Panc1 (cell line): ENCODE measurements at regions of chr11 and their contacts with region 1.

Region 1: GRCh38 chr11:4636962-4637661 is at the start of gene OR51D1:
- DNase-seq: peak; percentile 75
- ATAC-seq: peak; percentile 97
- H3K4me3 ChIP-seq: peak within 1 kb of the TSS in 1 of 2 experiments; percentile 34; a peak in 2 of 4 replicates
- H3K27ac ChIP-seq: no peak within 1 kb of the TSS
- H3K4me1 ChIP-seq: no peaks in the 10 kb centered on the region
- H3K27me3 ChIP-seq: peaks cover 6% of the 10 kb centered on the region; the same call in 1 of the 2 replicates
- CTCF ChIP-seq: peak; percentile 97
- total RNA-seq, gene OR51D1: not detected

Region 2: DNA sequence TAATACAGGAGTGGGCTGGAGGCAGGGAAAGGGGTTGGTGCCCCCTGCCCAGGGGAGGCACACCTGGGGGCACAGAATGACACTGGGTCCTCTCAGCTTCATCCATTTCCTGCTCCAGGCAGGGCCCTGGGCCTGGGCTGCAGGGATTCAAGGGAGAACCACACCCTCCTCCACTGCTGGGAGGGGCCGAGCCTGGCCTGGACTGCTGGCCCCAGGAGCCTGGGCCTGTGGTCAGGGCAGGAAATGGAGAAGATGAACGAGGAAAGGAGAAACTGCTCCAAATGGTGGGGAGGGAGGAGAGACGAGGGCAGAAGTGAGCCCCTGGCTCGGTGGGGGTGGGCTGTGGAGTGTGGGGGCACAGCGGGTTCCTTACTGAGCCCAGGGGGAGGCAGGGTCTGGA is 1899.2 kb before region 1 on chr11:
- CTCF ChIA-PET with region 1: no interaction called
- POLR2A ChIA-PET with region 1: no interaction called
- in situ Hi-C with region 1: no loop called
- intact Hi-C with region 1: no loop called
- DNase-seq: no peak
- ATAC-seq: no peak
- H3K4me3 ChIP-seq: no peak overlapping the region
- H3K27ac ChIP-seq: no peak overlapping the region
- H3K4me1 ChIP-seq: peaks cover 23% of the 10 kb centered on the region
- H3K27me3 ChIP-seq: no peaks in the 10 kb centered on the region
- CTCF ChIP-seq: no peak

Region 3: DNA sequence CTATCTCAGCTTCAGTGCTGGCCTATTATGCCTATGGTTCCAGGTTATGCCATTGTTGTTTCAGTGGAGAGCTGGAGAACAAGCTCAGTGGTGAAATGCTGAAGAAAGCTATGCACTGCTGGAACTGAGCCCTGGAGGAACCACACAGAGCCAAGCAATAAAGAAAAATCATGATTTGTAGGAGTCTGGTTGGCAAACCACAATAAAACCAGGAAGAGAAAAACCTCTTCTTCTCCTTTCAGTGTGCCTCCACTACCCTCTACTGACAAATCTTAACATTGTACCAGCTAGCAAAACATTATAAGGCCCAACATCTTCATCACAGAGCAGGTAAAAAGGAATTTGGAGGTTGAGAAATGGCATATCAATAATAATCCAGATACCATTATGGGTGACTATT is 189.3 kb after region 1 on chr11:
- CTCF ChIA-PET with region 1: interaction called, 13 read pairs
- POLR2A ChIA-PET with region 1: no interaction called
- in situ Hi-C with region 1: no loop called
- intact Hi-C with region 1: loop called (anchors 2 kb)
- DNase-seq: no peak
- ATAC-seq: peak; percentile 65; the same call in 1 of the 2 replicates
- H3K4me3 ChIP-seq: no peak overlapping the region
- H3K27ac ChIP-seq: no peak overlapping the region
- H3K4me1 ChIP-seq: no peaks in the 10 kb centered on the region
- H3K27me3 ChIP-seq: no peaks in the 10 kb centered on the region
- CTCF ChIP-seq: peak; percentile 38; the same call in 1 of the 2 replicates

Region 4: DNA sequence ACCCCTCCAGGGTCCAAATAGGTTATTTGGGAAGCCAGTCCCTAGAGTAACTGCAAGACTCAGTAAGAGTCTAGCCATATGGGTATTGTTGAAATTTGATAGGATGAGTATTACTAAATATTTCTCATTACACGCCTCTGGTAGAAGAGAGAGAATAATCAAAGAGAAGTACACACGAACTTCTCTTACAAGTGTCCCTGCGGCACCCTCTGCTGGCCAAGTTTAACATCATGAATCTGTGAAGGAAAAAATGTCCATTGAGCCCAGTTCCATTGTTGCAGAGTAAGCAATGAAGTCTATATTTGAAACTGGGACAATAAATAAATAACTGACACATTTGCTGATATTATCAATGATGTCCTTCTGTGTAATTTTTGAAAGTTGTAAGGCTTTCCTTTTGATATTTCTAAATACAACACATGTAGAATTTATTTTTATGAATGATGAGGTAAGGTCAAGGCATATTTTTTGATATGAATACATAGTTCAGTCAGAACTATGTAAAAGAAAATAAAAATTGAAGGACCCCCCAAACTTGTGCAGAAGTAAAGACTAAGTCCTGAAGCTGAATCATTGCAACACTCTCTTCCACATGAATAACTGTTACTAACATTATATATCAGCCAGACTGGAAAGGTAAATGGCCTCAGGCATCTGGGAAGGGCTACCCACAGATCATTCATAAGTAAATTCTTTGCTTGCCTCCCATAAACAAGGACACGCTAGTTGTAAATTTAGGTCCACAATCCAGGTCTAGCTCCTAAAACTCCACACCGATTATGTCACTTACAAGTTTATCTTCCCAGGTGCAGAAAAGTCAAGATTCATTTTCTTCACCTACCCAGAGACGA is 367.5 kb after region 1 on chr11:
- CTCF ChIA-PET with region 1: interaction called, 8 read pairs
- POLR2A ChIA-PET with region 1: no interaction called
- in situ Hi-C with region 1: no loop called
- intact Hi-C with region 1: loop called (anchors 1 kb)
- DNase-seq: peak; percentile 52
- ATAC-seq: peak; percentile 83
- H3K4me3 ChIP-seq: no peak overlapping the region
- H3K27ac ChIP-seq: no peak overlapping the region
- H3K4me1 ChIP-seq: no peaks in the 10 kb centered on the region
- H3K27me3 ChIP-seq: no peaks in the 10 kb centered on the region; the same call in 1 of the 2 replicates
- CTCF ChIP-seq: peak; percentile 81

Region 5: GRCh38 chr11:5092821-5093585 is 455.9 kb after region 1 on chr11:
- CTCF ChIA-PET with region 1: no interaction called
- POLR2A ChIA-PET with region 1: no interaction called
- in situ Hi-C with region 1: no loop called
- intact Hi-C with region 1: loop called (anchors 10 kb)
- DNase-seq: no peak
- ATAC-seq: no peak
- H3K4me3 ChIP-seq: no peak overlapping the region
- H3K27ac ChIP-seq: no peak overlapping the region
- H3K4me1 ChIP-seq: no peaks in the 10 kb centered on the region
- H3K27me3 ChIP-seq: no peaks in the 10 kb centered on the region; the same call in 1 of the 2 replicates
- CTCF ChIP-seq: no peak

Region 6: DNA sequence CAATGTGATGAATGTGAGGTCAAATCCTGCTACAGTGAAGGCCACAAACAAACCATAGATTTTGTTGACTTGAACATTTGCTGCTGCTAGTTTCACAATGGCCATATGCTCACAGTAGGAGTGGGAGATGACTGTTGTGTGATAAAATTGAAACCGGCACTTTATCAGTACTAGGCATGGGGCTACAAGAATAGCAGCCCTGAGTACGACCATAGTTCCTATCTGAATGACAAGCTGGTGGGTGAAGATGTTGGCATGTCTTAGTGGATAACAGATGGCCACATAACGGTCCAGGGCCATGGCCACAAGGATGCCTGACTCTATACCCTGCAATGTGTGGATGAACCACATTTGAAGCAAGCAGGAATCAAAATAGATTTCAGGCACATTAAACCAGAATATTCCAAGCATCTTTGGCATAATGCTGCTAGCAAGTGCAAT is 514.6 kb after region 1 on chr11:
- CTCF ChIA-PET with region 1: no interaction called
- POLR2A ChIA-PET with region 1: no interaction called
- in situ Hi-C with region 1: no loop called
- intact Hi-C with region 1: no loop called
- DNase-seq: no peak
- ATAC-seq: no peak
- H3K4me3 ChIP-seq: no peak overlapping the region
- H3K27ac ChIP-seq: no peak overlapping the region
- H3K4me1 ChIP-seq: no peaks in the 10 kb centered on the region
- H3K27me3 ChIP-seq: no peaks in the 10 kb centered on the region
- CTCF ChIP-seq: no peak